CD4-positive, alpha-beta T cell (primary cell): ENCODE measurements at regions of chr2 and their contacts with region 1.

Region 1: DNA sequence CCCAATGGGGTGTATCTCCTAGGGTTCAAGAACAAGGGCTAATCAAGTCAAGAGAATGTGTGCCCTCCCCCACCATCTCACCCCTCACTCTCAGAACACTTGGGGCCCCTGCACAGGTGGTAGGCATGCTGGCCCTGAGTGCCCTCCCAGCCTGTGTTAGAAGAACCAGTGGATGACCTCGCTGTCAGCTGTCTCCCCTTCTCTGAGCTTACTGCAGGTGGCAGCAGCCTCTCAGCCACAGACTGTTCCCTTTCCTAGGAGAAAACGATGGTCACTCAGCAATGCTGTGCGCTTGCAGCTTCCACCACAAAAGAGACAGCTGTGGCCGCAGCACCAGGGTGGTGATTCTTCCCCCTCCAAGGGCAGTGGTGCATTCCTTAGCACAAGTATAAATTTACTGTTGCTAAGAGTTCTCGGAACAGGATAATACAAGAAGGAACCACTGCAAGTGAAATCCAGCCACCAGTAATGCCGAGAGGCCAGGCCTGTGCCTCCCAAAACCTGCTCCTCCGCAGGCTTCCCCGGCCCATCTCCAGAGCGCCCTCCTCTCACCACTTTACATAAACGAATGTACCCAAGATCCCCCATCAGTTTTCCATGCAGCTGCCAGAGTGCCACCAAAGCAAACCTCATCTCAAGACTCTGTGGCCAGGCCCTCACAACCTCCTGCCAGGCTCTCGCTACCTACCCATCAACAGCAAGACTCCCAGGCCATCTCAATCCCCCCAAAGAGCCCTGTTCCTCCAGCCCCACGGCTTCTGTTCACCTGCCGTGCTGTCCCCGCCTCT is 935 bp upstream of the RAMP1 start:
- DNase-seq: peak in 9 of 14 experiments; percentile 11 to 73 (median 41)
- ATAC-seq: peak; percentile 64
- H3K4me3 ChIP-seq: no peak overlapping the region
- H3K4me3 Mint-ChIP-seq: peak overlapping the region; percentile 71
- H3K27ac ChIP-seq: no peak overlapping the region
- H3K27ac Mint-ChIP-seq: no peak overlapping the region
- H3K4me1 ChIP-seq: peaks cover 20% of the 10 kb centered on the region
- H3K4me1 Mint-ChIP-seq: peaks cover 5% of the 10 kb centered on the region
- H3K27me3 ChIP-seq: peaks cover 27 to 45% of the 10 kb centered on the region in 2 experiments
- H3K27me3 Mint-ChIP-seq: peaks cover 45% of the 10 kb centered on the region
- CTCF ChIP-seq: peak; percentile 47

Region 2: DNA sequence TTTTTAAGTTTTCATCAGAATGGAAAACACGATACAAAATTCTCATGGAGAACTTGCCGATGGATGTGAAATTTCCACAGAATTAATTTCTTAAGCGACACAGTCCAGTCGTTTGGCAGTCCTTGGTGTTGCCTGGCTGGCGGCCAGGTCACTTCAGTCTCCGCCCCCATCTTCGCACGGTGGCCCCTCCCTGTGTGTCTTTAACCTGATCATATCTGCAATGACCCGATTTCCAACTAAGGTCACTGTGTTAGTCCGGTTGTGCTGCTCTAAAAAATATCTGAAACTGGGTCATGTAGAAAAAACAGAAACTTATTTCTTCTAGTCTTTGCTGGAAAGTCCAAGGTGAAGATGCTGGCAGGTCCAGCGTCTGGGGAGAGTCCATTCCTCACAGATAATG is 817.2 kb before region 1 on chr2:
- CTCF ChIA-PET with region 1: no interaction called
- POLR2A ChIA-PET with region 1: no interaction called
- intact Hi-C with region 1: no loop called
- DNase-seq: no peak
- ATAC-seq: no peak
- H3K4me3 ChIP-seq: no peak overlapping the region
- H3K4me3 Mint-ChIP-seq: no peak overlapping the region
- H3K27ac ChIP-seq: no peak overlapping the region
- H3K27ac Mint-ChIP-seq: no peak overlapping the region
- H3K4me1 ChIP-seq: no peaks in the 10 kb centered on the region
- H3K4me1 Mint-ChIP-seq: no peaks in the 10 kb centered on the region
- H3K27me3 ChIP-seq: no peaks in the 10 kb centered on the region
- H3K27me3 Mint-ChIP-seq: peaks cover 12% of the 10 kb centered on the region
- CTCF ChIP-seq: no peak

Region 3: DNA sequence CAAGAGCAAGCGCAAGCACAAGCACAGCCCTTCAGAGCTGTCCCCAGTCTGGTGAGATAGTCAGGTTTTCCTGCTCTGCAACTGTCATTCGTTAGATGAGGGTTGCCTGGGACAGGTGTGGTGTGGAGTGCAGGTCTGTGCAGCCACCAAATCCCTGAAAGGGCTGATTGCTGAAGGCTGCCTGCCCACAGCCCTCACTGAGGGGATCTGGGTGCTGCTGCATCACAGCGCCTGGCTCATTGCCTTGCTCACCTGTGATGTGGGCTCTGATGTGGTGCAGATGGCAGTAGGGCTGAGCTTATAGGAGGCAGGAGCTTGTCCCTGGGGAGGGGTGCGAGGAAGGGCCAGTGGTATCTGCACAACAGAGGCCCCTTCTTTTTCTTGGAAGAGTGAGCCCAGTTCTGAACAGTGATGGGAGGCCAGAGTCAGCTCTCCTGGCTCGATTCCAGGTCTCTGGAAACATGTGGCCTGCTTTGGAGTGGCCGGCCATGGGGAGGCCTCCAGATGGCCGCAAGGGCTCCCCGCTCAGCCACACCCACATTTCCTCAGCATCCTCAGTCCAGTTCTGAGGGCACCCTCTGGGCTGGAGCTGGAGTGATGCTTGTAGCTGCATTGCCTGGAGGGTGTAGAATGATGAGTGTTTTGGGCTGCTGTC is 119.7 kb after region 1 on chr2:
- CTCF ChIA-PET with region 1: no interaction called
- POLR2A ChIA-PET with region 1: no interaction called
- intact Hi-C with region 1: loop called in 1 of 2 experiments (anchors 5 kb)
- DNase-seq: no peak
- ATAC-seq: no peak
- H3K4me3 ChIP-seq: no peak overlapping the region
- H3K4me3 Mint-ChIP-seq: no peak overlapping the region
- H3K27ac ChIP-seq: no peak overlapping the region
- H3K27ac Mint-ChIP-seq: peak overlapping the region; percentile 45
- H3K4me1 ChIP-seq: peaks cover 49% of the 10 kb centered on the region
- H3K4me1 Mint-ChIP-seq: peaks cover 57% of the 10 kb centered on the region
- H3K27me3 ChIP-seq: no peaks in the 10 kb centered on the region
- H3K27me3 Mint-ChIP-seq: no peaks in the 10 kb centered on the region
- CTCF ChIP-seq: no peak